Activated naive CD8-positive, alpha-beta T cell treated with anti-CD3 and anti-CD28 coated beads, Interleukin-2, amount 10 ng/mL, durations not matched to agents 7 days and 5 days (primary cell): ENCODE measurements at regions of chr4 and their contacts with region 1.

Region 1: GRCh38 chr4:75673027-75673958 is at the start of gene G3BP2:
- DNase-seq: peak; percentile 93
- ATAC-seq: peak; percentile 95
- H3K4me3 Mint-ChIP-seq: peak within 1 kb of the TSS; percentile 94
- H3K27ac Mint-ChIP-seq: peak within 1 kb of the TSS; percentile 99
- H3K4me1 Mint-ChIP-seq: peaks cover 41% of the 10 kb centered on the region
- H3K27me3 Mint-ChIP-seq: no peaks in the 10 kb centered on the region
- total RNA-seq, gene G3BP2: 165 to 179 TPM

Region 2: GRCh38 chr4:75593393-75593792 is 79.9 kb before region 1 on chr4:
- POLR2A ChIA-PET with region 1: no interaction called
- DNase-seq: no peak
- ATAC-seq: no peak
- H3K4me3 Mint-ChIP-seq: no peak overlapping the region
- H3K27ac Mint-ChIP-seq: no peak overlapping the region
- H3K4me1 Mint-ChIP-seq: peaks cover 3% of the 10 kb centered on the region
- H3K27me3 Mint-ChIP-seq: no peaks in the 10 kb centered on the region

Region 3: GRCh38 chr4:75653845-75654503 is 19.3 kb before region 1 on chr4:
- POLR2A ChIA-PET with region 1: interaction called, 101 read pairs
- DNase-seq: no peak
- ATAC-seq: peak; percentile 6
- H3K4me3 Mint-ChIP-seq: peak overlapping the region; percentile 73
- H3K27ac Mint-ChIP-seq: peak overlapping the region; percentile 89
- H3K4me1 Mint-ChIP-seq: peaks cover 58% of the 10 kb centered on the region
- H3K27me3 Mint-ChIP-seq: no peaks in the 10 kb centered on the region

Region 4: DNA sequence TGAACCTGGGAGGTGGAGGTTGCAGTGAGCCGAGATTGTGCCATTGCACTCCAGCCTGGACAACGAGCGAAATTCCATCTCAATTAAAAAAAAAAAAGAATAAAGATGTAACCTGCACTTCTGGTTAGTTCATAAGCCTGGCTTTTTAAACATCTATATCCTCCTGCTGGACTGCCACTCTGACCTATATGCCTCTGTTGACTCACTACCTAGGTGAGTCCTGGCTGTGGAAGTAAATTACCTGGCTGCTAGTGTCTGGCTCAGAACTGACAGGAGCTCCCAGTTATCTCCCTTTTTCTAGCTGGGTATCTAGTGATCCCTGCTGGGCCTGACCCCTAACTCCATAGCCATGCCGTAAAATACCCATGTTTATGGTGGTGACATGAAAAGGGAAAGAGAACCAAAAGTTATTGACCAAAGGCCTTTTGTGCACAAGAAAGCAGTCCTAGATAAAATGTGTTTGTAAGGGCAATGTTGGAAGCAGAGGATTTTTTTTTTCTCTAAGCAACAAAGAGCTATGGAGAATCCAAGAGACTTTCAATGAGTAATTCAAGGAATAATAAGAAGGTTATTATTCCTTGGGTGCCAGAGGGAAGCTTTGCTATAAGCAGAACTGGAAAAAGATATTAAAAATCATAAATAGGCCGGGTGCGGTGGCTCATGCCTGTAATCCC is 10.3 kb after region 1 on chr4:
- POLR2A ChIA-PET with region 1: interaction called, 45 read pairs
- DNase-seq: no peak
- ATAC-seq: no peak
- H3K4me3 Mint-ChIP-seq: no peak overlapping the region
- H3K27ac Mint-ChIP-seq: peak overlapping the region; percentile 60
- H3K4me1 Mint-ChIP-seq: peaks cover 35% of the 10 kb centered on the region
- H3K27me3 Mint-ChIP-seq: no peaks in the 10 kb centered on the region

Region 5: GRCh38 chr4:75698162-75698962 is 25.1 kb after region 1 on chr4:
- POLR2A ChIA-PET with region 1: interaction called, 17 read pairs
- DNase-seq: peak; percentile 39
- ATAC-seq: peak; percentile 77
- H3K4me3 Mint-ChIP-seq: peak overlapping the region; percentile 54
- H3K27ac Mint-ChIP-seq: peak overlapping the region; percentile 83
- H3K4me1 Mint-ChIP-seq: peaks cover 35% of the 10 kb centered on the region
- H3K27me3 Mint-ChIP-seq: no peaks in the 10 kb centered on the region

Region 6: DNA sequence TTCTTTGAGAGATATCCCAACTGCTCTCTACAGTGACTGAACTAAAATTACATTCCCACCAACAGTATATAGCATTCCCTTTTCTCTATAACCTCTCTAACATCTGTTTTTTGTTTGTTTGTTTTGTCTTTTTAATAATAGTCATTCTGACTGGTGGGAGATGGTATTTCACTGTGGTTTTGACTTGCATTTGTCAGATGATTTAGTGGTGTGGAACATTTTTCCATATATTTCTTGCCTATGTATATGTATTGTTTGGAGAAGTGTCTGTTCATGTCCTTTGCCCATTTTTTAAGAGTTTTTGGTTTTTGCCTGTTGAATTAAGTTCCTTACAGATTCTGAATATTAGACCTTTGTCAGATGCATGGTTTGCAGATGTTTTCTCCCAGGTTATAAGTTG is 60.1 kb after region 1 on chr4:
- POLR2A ChIA-PET with region 1: no interaction called
- DNase-seq: no peak
- ATAC-seq: no peak
- H3K4me3 Mint-ChIP-seq: no peak overlapping the region
- H3K27ac Mint-ChIP-seq: no peak overlapping the region
- H3K4me1 Mint-ChIP-seq: peaks cover 13% of the 10 kb centered on the region
- H3K27me3 Mint-ChIP-seq: no peaks in the 10 kb centered on the region